Adrenal gland (tissue), 19 donors: ENCODE measurements at regions of chr22 and their contacts with region 1.

Region 1: GRCh38 chr22:36369922-36370791 is 17.6 kb downstream of the MYH9 start:
- DNase-seq: peak in 6 of 7 donors; percentile 43 to 74 (median 64)
- H3K4me3 ChIP-seq: no peak overlapping the region
- H3K27ac ChIP-seq: peak overlapping the region; percentile 44 to 90 (median 79)
- H3K4me1 ChIP-seq: peaks cover 79 to 100% of the 10 kb centered on the region in 2 donors
- H3K27me3 ChIP-seq: no peaks in the 10 kb centered on the region
- CTCF ChIP-seq: no peak
- POLR2A ChIP-seq: peak in 1 of 2 donors; percentile 34

Region 2: GRCh38 chr22:36461669-36462649 is 91.8 kb after region 1 on chr22:
- intact Hi-C with region 1: loop called in 1 of 2 experiments (anchors 10 kb)
- DNase-seq: peak in 2 of 7 donors; percentile 66 to 75
- H3K4me3 ChIP-seq: no peak overlapping the region
- H3K27ac ChIP-seq: peak overlapping the region in 2 of 5 donors; percentile 4 to 70
- H3K4me1 ChIP-seq: peaks cover 7 to 13% of the 10 kb centered on the region in 2 donors
- H3K27me3 ChIP-seq: no peaks in the 10 kb centered on the region
- CTCF ChIP-seq: no peak
- POLR2A ChIP-seq: no peak